ENCODE measurements at regions of chr5 and their contacts with region 1.

Region 1: DNA sequence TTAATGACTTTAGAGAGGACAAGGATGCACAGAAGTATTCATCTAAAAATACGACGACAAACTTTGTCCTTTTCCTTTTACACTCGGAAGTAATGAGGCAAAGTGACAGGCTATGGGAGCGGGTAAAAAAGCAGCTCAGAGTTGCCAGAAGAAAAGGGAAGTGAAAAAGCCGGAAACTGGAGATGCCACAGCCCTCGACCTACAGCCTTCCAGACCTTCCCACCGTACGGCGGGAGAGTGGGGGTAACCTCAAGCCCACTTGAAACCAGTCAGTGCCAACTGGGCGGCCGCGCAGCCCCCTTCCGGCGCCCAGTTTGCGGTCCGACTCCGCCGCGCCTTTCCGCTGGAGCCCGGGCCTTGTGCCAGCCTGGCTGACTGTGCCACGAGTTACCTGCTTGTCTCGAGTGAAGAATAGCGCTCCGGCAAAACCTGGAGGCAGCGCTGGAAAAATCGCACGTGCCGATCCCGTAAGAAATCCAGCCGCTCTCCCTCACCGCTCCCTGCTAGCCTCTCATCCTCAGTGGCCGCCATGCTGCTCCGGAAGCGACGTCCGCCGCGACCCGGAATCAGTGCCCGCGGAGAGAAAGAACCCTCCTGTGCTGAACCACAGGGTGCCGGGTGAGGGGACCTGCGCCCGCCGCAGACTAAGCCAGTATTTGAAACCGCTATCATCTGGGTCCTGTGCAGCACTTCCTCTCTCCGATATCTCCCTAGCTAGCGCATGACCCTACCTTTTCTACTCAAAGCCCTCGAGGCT is at the start of gene PGGT1B:
- DNase-seq: peak; percentile 44 to 86
- H3K4me3 ChIP-seq: peak within 1 kb of the TSS; percentile 92 to 100 (median 94)
- H3K27ac ChIP-seq: peak within 1 kb of the TSS; percentile 76
- H3K4me1 ChIP-seq: peaks cover 0 to 4% (median 0%) of the 10 kb centered on the region in 4 experiments; a peak in 3 of 7 replicates
- H3K27me3 ChIP-seq: no peaks in the 10 kb centered on the region
- CTCF ChIP-seq: no peak
- EP300 ChIP-seq: no peak
- POLR2A ChIP-seq: peak; percentile 62 to 93
- RAD21 ChIP-seq: no peak; a peak in 1 of 4 replicates
- total RNA-seq, gene PGGT1B: 43.1 and 43.3 TPM in 2 replicates

Region 2: DNA sequence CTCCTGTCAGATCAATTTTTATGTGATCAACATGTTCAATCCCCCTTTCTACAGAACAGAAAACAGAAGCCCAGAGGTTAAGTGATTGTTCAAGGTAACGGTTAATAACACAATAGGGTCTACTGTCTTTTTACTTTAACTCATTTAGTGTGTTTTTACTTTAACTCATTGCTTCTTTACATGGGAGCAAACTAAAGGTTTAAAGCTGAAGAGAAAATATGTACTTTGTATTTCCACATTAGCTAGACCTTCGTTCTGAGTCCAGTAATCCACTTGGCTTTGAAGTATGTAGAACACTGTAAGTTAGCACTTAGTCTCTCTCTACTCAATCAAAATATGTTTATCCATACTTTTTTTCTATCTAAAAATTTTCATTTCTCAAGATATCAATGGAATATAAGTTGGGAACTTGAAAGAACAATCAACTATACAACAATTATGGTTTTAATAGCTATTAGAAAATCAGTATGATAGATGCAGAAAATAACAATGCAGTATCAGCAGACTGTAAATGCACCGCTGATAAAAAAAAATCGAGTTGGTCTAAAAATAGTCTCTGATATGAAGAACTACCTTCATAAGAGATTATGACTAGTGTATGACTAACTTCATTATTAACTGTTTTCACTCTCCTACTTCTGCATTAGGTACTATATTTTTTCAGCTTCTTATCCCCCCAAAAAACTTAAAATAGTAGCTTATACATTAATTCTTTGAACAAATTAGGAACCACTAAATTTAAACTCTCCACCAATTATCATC is 20.4 kb before region 1 on chr5:
- CTCF ChIA-PET with region 1: no interaction called
- POLR2A ChIA-PET with region 1: no interaction called
- DNase-seq: no peak
- H3K4me3 ChIP-seq: no peak overlapping the region
- H3K27ac ChIP-seq: no peak overlapping the region
- H3K4me1 ChIP-seq: no peaks in the 10 kb centered on the region
- H3K27me3 ChIP-seq: peaks cover 0 to 1% (median 0%) of the 10 kb centered on the region in 4 experiments; a peak in 1 of 7 replicates
- CTCF ChIP-seq: no peak
- EP300 ChIP-seq: no peak
- POLR2A ChIP-seq: no peak
- RAD21 ChIP-seq: no peak

Region 3: GRCh38 chr5:115274584-115274983 is 12.1 kb after region 1 on chr5:
- CTCF ChIA-PET with region 1: interaction called, 3 read pairs
- POLR2A ChIA-PET with region 1: interaction called, 10 read pairs
- DNase-seq: no peak
- H3K4me3 ChIP-seq: no peak overlapping the region
- H3K27ac ChIP-seq: no peak overlapping the region
- H3K4me1 ChIP-seq: no peaks in the 10 kb centered on the region
- H3K27me3 ChIP-seq: no peaks in the 10 kb centered on the region
- CTCF ChIP-seq: no peak
- EP300 ChIP-seq: no peak
- POLR2A ChIP-seq: no peak
- RAD21 ChIP-seq: no peak